ENCODE measurements at regions of chr6 and their contacts with region 1.

Region 1: DNA sequence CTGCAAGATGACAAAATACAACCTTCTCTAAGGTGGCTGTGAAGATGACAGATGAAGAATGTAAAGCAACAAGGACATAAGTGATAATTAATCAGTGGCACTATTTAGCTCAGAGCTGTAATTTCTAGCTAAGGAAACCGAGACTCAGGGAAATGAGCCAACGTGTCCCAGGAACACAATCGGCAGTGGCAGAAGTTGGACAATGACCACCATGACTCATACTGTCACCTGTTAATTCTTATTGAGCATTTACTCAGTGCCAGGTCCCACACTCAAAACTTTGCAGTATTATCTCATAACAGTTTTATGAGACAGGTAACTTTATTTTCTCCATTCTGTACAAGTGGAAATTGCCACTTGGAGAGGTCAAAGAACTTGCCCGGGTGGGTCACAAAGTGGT is 55.8 kb downstream of the LAMA4 start:
- DNase-seq: no peak
- H3K4me3 ChIP-seq: no peak overlapping the region
- H3K27ac ChIP-seq: no peak overlapping the region
- H3K4me1 ChIP-seq: peaks cover 10% of the 10 kb centered on the region
- H3K27me3 ChIP-seq: no peaks in the 10 kb centered on the region
- CTCF ChIP-seq: no peak
- POLR2A ChIP-seq: no peak

Region 2: DNA sequence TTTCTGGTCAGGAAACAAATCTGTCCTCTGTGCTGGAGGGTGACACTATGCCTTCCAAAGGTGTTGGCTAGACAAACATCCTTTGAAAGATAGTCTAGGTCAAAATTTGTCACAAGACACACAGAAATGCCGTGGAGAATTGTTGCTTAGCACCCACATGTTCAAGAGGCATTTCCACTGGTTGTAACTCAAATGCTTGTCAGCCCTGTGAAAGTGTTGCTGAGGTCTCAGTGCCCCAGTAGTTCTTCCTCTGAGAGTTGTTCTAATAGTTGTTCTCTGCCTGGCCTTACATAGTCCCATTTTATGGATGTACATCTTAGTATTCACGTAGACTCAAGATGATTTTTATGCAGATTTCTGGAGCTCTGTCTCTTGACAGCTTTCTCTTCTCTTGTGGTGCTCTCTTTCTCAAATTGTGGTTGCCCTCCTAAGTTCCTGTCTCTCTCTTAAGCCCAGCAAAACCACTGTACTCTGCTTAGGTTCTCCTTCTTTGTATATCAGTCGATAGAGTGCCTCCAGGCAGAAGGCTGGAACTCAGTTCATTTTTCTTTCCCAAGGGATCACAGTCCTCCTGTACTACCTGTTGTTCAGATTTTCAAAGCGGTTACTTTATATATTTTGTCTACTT is 676.1 kb before region 1 on chr6:
- intact Hi-C with region 1: no loop called
- DNase-seq: no peak
- H3K4me3 ChIP-seq: no peak overlapping the region
- H3K27ac ChIP-seq: peak overlapping the region; percentile 38
- H3K4me1 ChIP-seq: peaks cover 21% of the 10 kb centered on the region
- H3K27me3 ChIP-seq: no peaks in the 10 kb centered on the region
- CTCF ChIP-seq: no peak
- POLR2A ChIP-seq: no peak

Region 3: DNA sequence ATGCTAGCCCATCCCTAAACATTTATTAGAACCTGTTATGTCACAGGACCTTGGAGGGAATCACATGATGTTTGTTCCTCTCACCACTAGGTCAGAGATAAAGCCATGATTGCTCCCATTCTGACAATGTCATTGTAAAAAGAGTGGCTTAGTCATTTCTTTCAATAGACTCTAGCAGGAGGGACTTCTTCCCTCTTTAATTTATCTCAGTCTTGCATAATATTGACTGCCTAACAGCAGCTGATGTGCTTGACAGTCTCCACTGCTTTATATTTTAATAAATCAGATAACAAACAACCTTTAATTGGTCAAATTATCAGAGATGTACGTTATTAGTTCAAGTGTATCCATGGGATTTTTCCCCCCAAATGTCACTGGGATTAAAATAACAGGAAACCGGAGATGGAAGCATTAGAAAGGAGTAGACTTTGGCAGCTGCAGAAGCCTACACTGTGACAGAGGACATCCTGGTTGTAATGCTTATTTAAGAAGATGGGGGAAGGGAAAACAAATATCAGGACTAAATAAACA is 16.2 kb after region 1 on chr6:
- intact Hi-C with region 1: loop called (anchors 1 kb)
- DNase-seq: no peak
- H3K4me3 ChIP-seq: no peak overlapping the region
- H3K27ac ChIP-seq: no peak overlapping the region
- H3K4me1 ChIP-seq: peaks cover 41% of the 10 kb centered on the region
- H3K27me3 ChIP-seq: no peaks in the 10 kb centered on the region
- CTCF ChIP-seq: no peak
- POLR2A ChIP-seq: no peak

Region 4: GRCh38 chr6:112337209-112337638 is 138.6 kb after region 1 on chr6:
- intact Hi-C with region 1: no loop called
- DNase-seq: no peak
- H3K4me3 ChIP-seq: no peak overlapping the region
- H3K27ac ChIP-seq: no peak overlapping the region
- H3K4me1 ChIP-seq: no peaks in the 10 kb centered on the region
- H3K27me3 ChIP-seq: no peaks in the 10 kb centered on the region
- CTCF ChIP-seq: peak in 2 of 3 experiments; percentile 23 to 39
- POLR2A ChIP-seq: no peak

Measured in vagina (tissue), 2 donors.